A549 (cell line): ENCODE measurements at regions of chr3 and their contacts with region 1.

Region 1: GRCh38 chr3:141360888-141361598 is 7.3 kb upstream of the ZBTB38 start:
- DNase-seq: peak; percentile 86 to 95
- ATAC-seq: peak; percentile 95
- H3K4me3 ChIP-seq: no peak overlapping the region
- H3K27ac ChIP-seq: peak overlapping the region; percentile 89 to 100
- H3K4me1 ChIP-seq: peaks cover 30% of the 10 kb centered on the region
- CTCF ChIP-seq: peak; percentile 92
- EP300 ChIP-seq: peak; percentile 75 to 84; a peak in 3 of 5 replicates
- POLR2A ChIP-seq: no peak
- RAD21 ChIP-seq: peak; percentile 94 to 97

Region 2: GRCh38 chr3:141303481-141304223 is 57.4 kb before region 1 on chr3:
- CTCF ChIA-PET with region 1: interaction called, 36 read pairs
- POLR2A ChIA-PET with region 1: no interaction called
- DNase-seq: peak; percentile 69 to 79
- ATAC-seq: peak; percentile 65 to 83; a peak in 5 of 6 replicates
- H3K4me3 ChIP-seq: no peak overlapping the region
- H3K27ac ChIP-seq: peak overlapping the region; percentile 21 to 71; a peak in 5 of 6 replicates
- H3K4me1 ChIP-seq: peaks cover 34% of the 10 kb centered on the region
- CTCF ChIP-seq: peak; percentile 87
- EP300 ChIP-seq: no peak
- POLR2A ChIP-seq: no peak
- RAD21 ChIP-seq: peak; percentile 83 to 87

Region 3: DNA sequence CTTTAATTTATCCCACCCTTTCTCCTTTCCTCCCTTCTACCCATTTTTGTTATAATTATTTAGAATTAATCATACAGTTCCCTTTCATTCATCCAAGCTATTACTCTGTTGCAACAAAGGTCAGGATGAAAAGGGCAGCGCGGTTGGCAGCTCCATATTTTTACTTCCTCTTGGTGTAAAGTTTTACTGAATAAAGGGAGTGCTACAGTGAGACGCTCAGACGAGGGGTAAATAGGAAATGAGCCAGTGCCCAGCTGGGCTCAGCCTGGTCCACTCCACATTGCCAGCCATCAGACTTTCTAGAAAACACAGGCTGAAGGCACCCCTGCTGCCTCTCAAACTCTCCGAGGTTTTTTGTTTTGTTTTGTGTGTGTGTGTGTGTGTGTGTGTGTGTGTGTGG is 14.6 kb before region 1 on chr3:
- CTCF ChIA-PET with region 1: interaction called, 15 read pairs
- POLR2A ChIA-PET with region 1: no interaction called
- DNase-seq: no peak
- ATAC-seq: no peak
- H3K4me3 ChIP-seq: no peak overlapping the region
- H3K27ac ChIP-seq: peak overlapping the region; percentile 47 to 74
- H3K4me1 ChIP-seq: peaks cover 25% of the 10 kb centered on the region
- CTCF ChIP-seq: no peak
- EP300 ChIP-seq: no peak
- POLR2A ChIP-seq: no peak
- RAD21 ChIP-seq: no peak

Region 4: DNA sequence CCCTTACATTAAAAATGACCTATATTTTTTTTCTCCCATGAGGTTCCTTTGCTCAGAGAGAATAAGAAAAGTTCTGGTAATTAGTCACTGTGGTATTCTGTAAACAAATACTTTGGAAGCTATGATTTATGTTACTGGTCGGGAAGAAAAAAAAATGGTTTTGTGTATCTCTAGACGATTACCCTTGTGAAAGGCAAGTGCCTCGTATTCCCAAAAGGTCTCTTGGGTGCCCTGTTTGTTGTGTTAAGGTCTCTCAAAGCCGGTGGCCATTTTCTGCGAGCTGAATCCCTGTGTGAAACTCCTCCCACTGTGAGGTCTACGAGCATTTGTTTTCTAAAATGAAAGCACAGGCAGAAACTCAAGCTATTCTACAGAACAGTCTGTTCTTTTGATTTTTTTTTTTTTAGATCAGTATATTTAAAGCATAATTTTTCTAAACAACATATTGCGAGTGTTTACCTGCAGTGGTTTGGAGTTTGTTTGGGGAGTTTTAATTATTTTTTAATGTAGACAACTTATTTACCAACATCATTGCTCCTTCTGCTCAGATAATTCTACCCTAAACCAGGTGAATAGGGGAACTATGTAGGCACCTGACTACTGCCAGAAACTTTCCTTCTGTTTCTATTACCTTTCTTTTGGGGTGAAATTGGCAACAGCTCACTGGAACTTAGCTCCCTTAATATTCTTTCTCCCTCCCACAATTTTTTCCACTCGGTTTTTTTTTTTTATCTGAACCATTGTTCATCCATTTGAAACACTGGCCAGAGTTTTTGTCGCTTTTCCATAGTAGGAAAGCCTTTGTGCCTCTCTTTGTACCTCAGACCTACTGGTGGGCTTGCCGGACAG is 51.3 kb after region 1 on chr3:
- CTCF ChIA-PET with region 1: interaction called, 15 read pairs
- POLR2A ChIA-PET with region 1: interaction called, 7 read pairs
- DNase-seq: peak; percentile 58 to 91
- ATAC-seq: peak; percentile 49 to 51
- H3K4me3 ChIP-seq: peak overlapping the region; percentile 22; the same call in 1 of the 3 replicates
- H3K27ac ChIP-seq: peak overlapping the region; percentile 99 to 100
- H3K4me1 ChIP-seq: peaks cover 99% of the 10 kb centered on the region
- CTCF ChIP-seq: no peak
- EP300 ChIP-seq: peak in 1 of 2 experiments; percentile 21; a peak in 1 of 5 replicates
- POLR2A ChIP-seq: no peak
- RAD21 ChIP-seq: no peak

Region 5: GRCh38 chr3:141431411-141432378 is 70.7 kb after region 1 on chr3:
- CTCF ChIA-PET with region 1: interaction called, 17 read pairs
- POLR2A ChIA-PET with region 1: no interaction called
- DNase-seq: no peak
- ATAC-seq: no peak
- H3K4me3 ChIP-seq: no peak overlapping the region
- H3K27ac ChIP-seq: peak overlapping the region; percentile 4 to 68; a peak in 4 of 6 replicates
- H3K4me1 ChIP-seq: peaks cover 70% of the 10 kb centered on the region
- CTCF ChIP-seq: no peak
- EP300 ChIP-seq: no peak
- POLR2A ChIP-seq: no peak
- RAD21 ChIP-seq: no peak

Region 6: DNA sequence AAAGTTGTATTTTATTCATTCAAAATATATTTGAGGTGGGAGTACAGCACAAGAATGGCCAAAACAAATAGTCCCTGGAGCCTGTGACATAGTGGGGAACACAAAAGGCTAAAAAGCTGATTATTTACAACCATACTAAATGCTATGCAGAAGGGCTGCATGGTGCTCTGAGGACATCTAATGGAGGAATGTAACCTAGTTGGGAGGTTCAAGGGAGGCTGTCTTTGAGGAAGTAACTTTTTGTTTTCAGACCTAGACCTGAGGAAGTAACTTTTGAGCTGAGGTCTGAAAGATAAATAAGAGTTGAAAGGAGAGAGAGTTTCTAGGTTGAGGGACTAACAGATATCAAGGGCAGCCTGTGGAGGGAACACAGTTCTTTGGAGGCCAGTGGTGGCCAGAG is 91.0 kb after region 1 on chr3:
- CTCF ChIA-PET with region 1: interaction called, 58 read pairs
- POLR2A ChIA-PET with region 1: interaction called, 3 read pairs
- DNase-seq: peak; percentile 38 to 82
- ATAC-seq: peak; percentile 74 to 79
- H3K4me3 ChIP-seq: no peak overlapping the region
- H3K27ac ChIP-seq: peak overlapping the region; percentile 67 to 79
- H3K4me1 ChIP-seq: peaks cover 44% of the 10 kb centered on the region
- CTCF ChIP-seq: peak; percentile 84
- EP300 ChIP-seq: no peak
- POLR2A ChIP-seq: no peak
- RAD21 ChIP-seq: peak; percentile 96 to 98

Region 7: GRCh38 chr3:141575879-141576743 is 215.1 kb after region 1 on chr3:
- CTCF ChIA-PET with region 1: no interaction called
- POLR2A ChIA-PET with region 1: no interaction called
- DNase-seq: peak; percentile 20 to 25
- ATAC-seq: peak; percentile 71 to 86; a peak in 4 of 6 replicates
- H3K4me3 ChIP-seq: no peak overlapping the region
- H3K27ac ChIP-seq: no peak overlapping the region
- H3K4me1 ChIP-seq: peaks cover 3% of the 10 kb centered on the region; the same call in 1 of the 3 replicates
- CTCF ChIP-seq: peak; percentile 58
- EP300 ChIP-seq: no peak
- POLR2A ChIP-seq: no peak
- RAD21 ChIP-seq: peak; percentile 51 to 61

Region 8: DNA sequence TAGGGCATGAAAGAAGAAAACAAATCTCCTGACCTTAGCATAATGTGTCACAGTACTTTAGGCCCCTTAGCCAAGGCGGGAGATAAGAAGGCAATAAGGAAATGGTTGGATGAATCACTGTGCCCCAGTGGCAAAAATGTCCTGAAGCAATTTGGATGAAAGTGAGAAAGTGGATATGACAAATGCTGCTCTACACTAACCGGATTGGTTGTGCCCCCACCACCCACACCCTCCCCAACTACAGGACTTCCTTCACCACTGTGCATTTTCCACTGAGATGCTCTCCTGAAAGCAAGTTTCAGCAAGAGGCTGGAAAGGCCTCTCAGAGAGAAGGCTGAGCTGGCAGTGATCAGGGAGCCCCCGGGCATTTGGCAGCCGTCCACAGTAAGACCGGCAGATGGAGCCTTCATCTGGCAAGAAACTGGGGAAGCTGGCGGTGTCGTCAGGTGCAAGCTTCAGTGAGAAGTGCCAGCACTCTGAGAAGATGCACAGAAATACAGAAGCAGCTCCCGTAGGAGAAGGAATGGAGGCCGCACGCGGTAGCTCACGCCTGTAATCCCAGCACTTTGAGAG is 579.2 kb after region 1 on chr3:
- CTCF ChIA-PET with region 1: no interaction called
- POLR2A ChIA-PET with region 1: no interaction called
- DNase-seq: peak; percentile 47 to 48
- ATAC-seq: peak; percentile 74 to 80
- H3K4me3 ChIP-seq: no peak overlapping the region
- H3K27ac ChIP-seq: peak overlapping the region in 1 of 2 experiments; percentile 27; a peak in 2 of 6 replicates
- H3K4me1 ChIP-seq: peaks cover 13% of the 10 kb centered on the region
- CTCF ChIP-seq: no peak
- EP300 ChIP-seq: no peak
- POLR2A ChIP-seq: no peak
- RAD21 ChIP-seq: no peak